Body of pancreas (tissue), 4 donors: ENCODE measurements at regions of chr22 and their contacts with region 1.

Region 1: GRCh38 chr22:46245511-46245910 is 4.6 kb downstream of the CDPF1 start:
- DNase-seq: peak in 3 of 4 donors; percentile 20 to 49 (median 25)
- ATAC-seq: no peak
- H3K4me3 ChIP-seq: no peak overlapping the region
- H3K27ac ChIP-seq: no peak overlapping the region
- H3K4me1 ChIP-seq: peaks cover 25% of the 10 kb centered on the region
- H3K27me3 ChIP-seq: no peaks in the 10 kb centered on the region
- CTCF ChIP-seq: no peak
- POLR2A ChIP-seq: no peak

Region 2: GRCh38 chr22:46066691-46067090 is 178.8 kb before region 1 on chr22:
- intact Hi-C with region 1: no loop called
- DNase-seq: peak in 3 of 4 donors; percentile 39 to 64 (median 46)
- ATAC-seq: no peak
- H3K4me3 ChIP-seq: no peak overlapping the region
- H3K27ac ChIP-seq: peak overlapping the region; percentile 99 to 100 (median 100)
- H3K4me1 ChIP-seq: peaks cover 75% of the 10 kb centered on the region
- H3K27me3 ChIP-seq: no peaks in the 10 kb centered on the region
- CTCF ChIP-seq: no peak
- POLR2A ChIP-seq: peak in 1 of 3 donors; percentile 9

Region 3: GRCh38 chr22:46150034-46150654 is 95.4 kb before region 1 on chr22 and contains the start of gene PPARA:
- intact Hi-C with region 1: loop called (anchors 10 kb)
- DNase-seq: peak; percentile 93 to 96 (median 94)
- ATAC-seq: peak; percentile 92
- H3K4me3 ChIP-seq: peak within 1 kb of the TSS; percentile 62 to 70
- H3K27ac ChIP-seq: peak within 1 kb of the TSS; percentile 92 to 98 (median 97)
- H3K4me1 ChIP-seq: peaks cover 48% of the 10 kb centered on the region
- H3K27me3 ChIP-seq: no peaks in the 10 kb centered on the region
- CTCF ChIP-seq: peak in 1 of 7 experiments; percentile 4
- POLR2A ChIP-seq: peak in 2 of 3 donors; percentile 15 to 26
- total RNA-seq, gene PPARA: 15.8 to 19.8 TPM